Mucosa of descending colon (tissue), 3 donors: ENCODE measurements at regions of chr2 and their contacts with region 1.

Region 1: GRCh38 chr2:10434886-10435819 is 13.0 kb downstream of the ODC1 start:
- DNase-seq: peak; percentile 78 to 86 (median 81)
- ATAC-seq: peak; percentile 73
- H3K4me3 ChIP-seq: no peak overlapping the region
- H3K4me1 ChIP-seq: peaks cover 22% of the 10 kb centered on the region
- CTCF ChIP-seq: peak; percentile 93

Region 2: GRCh38 chr2:10072656-10073480 is 362.3 kb before region 1 on chr2:
- intact Hi-C with region 1: loop called in 1 of 2 experiments (anchors 10 kb)
- DNase-seq: peak; percentile 73 to 90 (median 75)
- ATAC-seq: peak; percentile 99
- H3K4me3 ChIP-seq: no peak overlapping the region
- H3K4me1 ChIP-seq: no peaks in the 10 kb centered on the region
- CTCF ChIP-seq: peak; percentile 68

Region 3: GRCh38 chr2:10122386-10123280 is 312.5 kb before region 1 on chr2 and contains the start of gene RRM2:
- intact Hi-C with region 1: loop called (anchors 5 to 10 kb)
- DNase-seq: peak; percentile 91 to 97 (median 93)
- ATAC-seq: peak; percentile 82
- H3K4me3 ChIP-seq: peak within 1 kb of the TSS; percentile 28
- H3K4me1 ChIP-seq: peaks cover 46% of the 10 kb centered on the region
- CTCF ChIP-seq: no peak
- total RNA-seq, gene RRM2: 8.5 to 65.3 (median 12.5) TPM

Region 4: GRCh38 chr2:10629819-10630532 is 194.8 kb after region 1 on chr2:
- intact Hi-C with region 1: no loop called
- DNase-seq: no peak
- ATAC-seq: peak; percentile 17
- H3K4me3 ChIP-seq: no peak overlapping the region
- H3K4me1 ChIP-seq: peaks cover 2% of the 10 kb centered on the region
- CTCF ChIP-seq: no peak